ENCODE measurements at regions of chr4 and their contacts with region 1.

Region 1: DNA sequence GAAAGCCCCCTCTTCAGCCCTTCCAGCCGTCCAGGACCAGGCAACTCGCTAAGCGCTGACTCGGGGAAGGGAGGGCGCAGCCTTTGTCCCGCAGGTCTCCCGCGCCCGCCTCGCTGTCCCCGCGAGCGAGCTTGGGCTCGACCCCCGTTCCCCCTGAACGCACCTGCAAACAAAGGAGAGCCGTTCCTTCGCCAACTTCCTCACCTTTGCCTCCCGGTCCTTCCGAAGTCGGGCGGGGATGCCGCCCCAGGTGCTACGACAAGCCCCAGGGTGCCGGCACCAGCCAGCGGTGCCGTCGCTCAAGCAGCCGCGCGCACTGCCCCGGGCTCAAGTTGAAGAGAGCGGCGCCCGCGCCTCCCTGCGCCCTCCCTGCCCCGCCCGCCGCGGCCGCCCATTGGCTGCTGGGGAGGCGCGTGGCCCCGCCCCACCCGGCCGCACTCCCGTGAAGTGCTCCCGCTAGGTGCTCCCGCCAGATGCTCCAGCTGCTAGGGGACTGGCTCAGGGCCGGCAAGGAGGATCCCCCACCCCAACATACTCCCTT is 107.1 kb downstream of the NSUN7 start:
- DNase-seq: peak; percentile 79 to 93
- ATAC-seq: peak; percentile 91
- H3K4me3 ChIP-seq: peak overlapping the region in 1 of 2 donors; percentile 40
- H3K27ac ChIP-seq: no peak overlapping the region
- H3K4me1 ChIP-seq: no peaks in the 10 kb centered on the region
- H3K27me3 ChIP-seq: no peaks in the 10 kb centered on the region

Region 2: GRCh38 chr4:40647761-40648530 is 208.9 kb before region 1 on chr4:
- intact Hi-C with region 1: no loop called
- DNase-seq: no peak
- ATAC-seq: no peak
- H3K4me3 ChIP-seq: no peak overlapping the region
- H3K27ac ChIP-seq: no peak overlapping the region
- H3K4me1 ChIP-seq: no peaks in the 10 kb centered on the region
- H3K27me3 ChIP-seq: no peaks in the 10 kb centered on the region

Region 3: DNA sequence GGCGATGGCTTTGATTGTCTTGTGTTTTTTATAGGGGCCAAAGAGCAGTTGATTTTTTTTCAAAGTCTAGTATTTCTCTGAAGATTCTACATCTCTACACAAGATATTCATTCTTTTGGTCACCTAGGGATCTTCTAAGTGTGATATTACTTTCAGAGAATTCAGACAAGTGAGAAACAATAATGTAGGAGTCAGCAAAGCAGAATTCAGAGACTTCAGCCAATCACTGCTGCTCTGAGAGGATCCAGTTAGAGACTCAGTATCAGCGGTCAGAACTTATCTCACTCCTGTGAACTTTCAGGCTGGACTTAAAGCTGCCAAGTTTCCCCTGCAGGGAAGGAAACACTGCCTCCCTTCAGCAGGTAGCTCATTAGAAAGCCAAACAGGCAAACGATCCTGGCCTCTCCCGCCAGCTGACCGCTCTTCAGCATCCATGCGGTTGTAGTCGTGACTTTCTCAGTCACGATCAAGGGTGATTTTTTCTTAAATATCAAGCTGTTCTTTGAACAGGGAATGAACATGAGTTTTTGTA is 47.9 kb before region 1 on chr4:
- intact Hi-C with region 1: no loop called
- DNase-seq: no peak
- ATAC-seq: no peak
- H3K4me3 ChIP-seq: no peak overlapping the region
- H3K27ac ChIP-seq: no peak overlapping the region
- H3K4me1 ChIP-seq: peaks cover 0 to 2% of the 10 kb centered on the region in 2 donors
- H3K27me3 ChIP-seq: no peaks in the 10 kb centered on the region

Region 4: GRCh38 chr4:40908702-40909362 is 51.9 kb after region 1 on chr4:
- intact Hi-C with region 1: loop called in 1 of 2 experiments (anchors 5 kb)
- DNase-seq: peak; percentile 84 to 88
- ATAC-seq: peak; percentile 90
- H3K4me3 ChIP-seq: no peak overlapping the region
- H3K27ac ChIP-seq: peak overlapping the region; percentile 62 to 97
- H3K4me1 ChIP-seq: peaks cover 0 to 3% of the 10 kb centered on the region in 2 donors
- H3K27me3 ChIP-seq: peaks cover 0 to 1% of the 10 kb centered on the region in 2 donors